HEK293 (cell line): ENCODE measurements at regions of chr1 and their contacts with region 1.

Region 1: DNA sequence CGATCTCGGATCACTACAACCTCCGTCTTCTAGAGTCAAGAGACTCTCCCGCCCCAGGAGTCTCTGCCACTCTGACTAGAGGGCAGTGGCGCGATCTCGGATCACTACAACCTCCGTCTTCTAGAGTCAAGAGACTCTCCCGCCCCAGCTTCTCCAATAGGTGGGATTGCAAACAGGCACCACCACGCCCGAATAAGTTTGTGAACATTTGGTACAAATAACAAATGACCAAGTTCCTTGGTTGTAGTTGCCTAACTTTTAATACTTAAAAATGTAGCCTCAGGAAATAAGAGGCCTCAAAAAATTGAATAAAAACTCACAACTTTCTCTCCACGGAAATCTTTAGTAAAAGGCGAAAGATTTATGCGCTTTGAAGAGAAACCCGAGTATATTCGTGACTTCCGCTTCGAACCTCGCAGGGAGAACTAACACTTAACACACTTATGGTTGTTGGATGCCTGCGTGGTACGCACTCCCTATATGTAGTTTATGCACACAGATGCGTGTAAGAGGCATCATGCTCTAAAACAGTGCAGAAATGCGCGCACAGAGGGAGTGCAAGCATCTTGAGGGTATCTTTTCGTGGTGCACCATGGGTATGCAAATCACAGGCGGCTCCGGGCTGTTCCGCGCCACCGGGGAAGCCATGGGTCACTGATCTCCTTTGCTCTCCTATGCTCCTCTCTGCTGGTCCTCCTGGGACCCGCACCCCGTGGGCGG is 11.4 kb downstream of the BTBD19 start:
- H3K4me3 ChIP-seq: peak overlapping the region; percentile 31
- H3K27ac ChIP-seq: peak overlapping the region; percentile 91
- H3K4me1 ChIP-seq: no peaks in the 10 kb centered on the region
- CTCF ChIP-seq: no peak

Region 2: GRCh38 chr1:44655609-44656008 is 164.2 kb before region 1 on chr1:
- CTCF ChIA-PET with region 1: no interaction called
- POLR2A ChIA-PET with region 1: no interaction called
- H3K4me3 ChIP-seq: no peak overlapping the region
- H3K27ac ChIP-seq: no peak overlapping the region
- H3K4me1 ChIP-seq: no peaks in the 10 kb centered on the region
- CTCF ChIP-seq: peak; percentile 83

Region 3: DNA sequence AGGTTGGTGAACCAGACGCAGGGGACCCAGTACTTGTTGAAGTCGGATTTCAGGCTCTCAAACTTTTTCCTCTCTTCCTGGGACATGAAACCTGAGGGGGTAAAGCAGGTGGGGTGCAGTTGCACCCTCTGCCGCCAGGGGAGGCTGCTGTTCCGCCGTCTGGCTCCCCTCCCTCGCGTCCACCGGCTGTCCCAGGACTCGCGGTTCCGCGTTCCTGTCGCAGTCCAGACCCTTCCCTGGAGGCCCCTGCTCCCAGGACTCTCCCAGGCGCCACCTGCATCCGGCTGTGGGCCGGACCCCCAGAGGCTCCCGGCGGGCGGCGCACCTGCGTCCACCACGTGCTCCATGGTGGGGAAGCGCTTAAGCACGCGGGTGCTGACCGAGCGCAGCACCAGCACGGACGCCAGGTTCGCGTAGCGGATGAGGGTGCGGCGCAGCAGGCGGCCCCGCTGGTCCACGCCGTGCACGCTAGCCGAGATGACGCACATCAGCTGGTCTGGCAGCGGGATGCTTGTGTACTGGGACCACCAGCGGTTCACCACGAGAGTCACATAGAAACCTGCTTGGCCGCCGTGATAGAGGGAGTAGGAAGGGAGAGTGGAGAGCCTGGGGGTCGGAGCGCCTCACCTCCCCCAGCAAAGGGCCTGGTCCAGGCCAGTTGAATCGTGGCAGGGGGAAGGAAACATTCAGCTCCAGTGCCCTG is 33.5 kb before region 1 on chr1:
- CTCF ChIA-PET with region 1: interaction called, 13 read pairs
- POLR2A ChIA-PET with region 1: interaction called, 4 read pairs
- H3K4me3 ChIP-seq: peak overlapping the region; percentile 48
- H3K27ac ChIP-seq: peak overlapping the region; percentile 18; the same call in 1 of the 2 replicates
- H3K4me1 ChIP-seq: 0 out of 2 replicates have a peak, but pooled peaks cover 2% of the 10 kb centered on the region
- CTCF ChIP-seq: peak; percentile 99

Region 4: DNA sequence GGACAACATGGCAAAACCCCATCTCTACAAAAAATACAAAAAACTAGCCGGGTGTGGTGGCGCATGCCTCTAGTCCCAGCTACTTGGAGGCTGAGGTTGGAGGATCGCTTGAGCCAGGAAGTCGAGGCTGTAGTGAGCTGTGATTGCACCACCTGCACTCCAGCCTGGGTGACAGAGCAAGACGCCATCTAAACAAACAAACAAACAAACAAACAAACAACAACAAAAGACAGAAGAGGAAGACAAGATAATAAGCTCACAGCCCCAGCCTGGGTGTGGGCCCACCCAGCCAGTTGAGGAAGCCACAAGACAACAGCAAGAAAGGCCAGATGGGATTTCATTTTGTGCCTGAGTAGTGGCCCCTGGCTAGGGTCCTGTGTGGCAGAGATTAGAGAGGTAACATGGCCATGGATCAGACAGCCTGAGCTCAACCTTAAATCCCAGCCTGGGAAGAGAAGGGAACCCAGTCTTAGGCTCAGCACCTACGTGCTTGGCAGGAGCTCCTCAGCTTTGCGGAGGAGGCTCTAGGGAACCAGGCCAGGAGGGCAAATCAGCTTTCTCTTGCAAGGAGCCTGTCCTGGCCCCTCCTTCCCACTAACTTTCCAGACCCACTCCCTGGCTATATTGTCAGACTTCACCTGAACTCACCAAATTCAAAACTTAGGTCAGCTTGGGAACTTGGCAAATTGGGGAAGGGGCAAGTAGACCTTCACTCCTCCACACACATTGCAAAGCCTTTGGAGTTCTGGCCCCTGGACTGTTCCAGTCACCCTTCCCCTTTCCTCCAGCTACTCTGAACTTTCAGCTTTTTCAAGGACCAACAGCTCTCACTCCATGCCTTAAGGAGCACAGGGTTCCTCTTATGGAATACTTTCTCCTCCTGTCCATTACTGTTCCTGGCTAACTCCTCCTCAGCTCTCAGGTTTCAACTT is 26.7 kb before region 1 on chr1:
- CTCF ChIA-PET with region 1: interaction called, 28 read pairs
- POLR2A ChIA-PET with region 1: interaction called, 62 read pairs
- H3K4me3 ChIP-seq: no peak overlapping the region
- H3K27ac ChIP-seq: no peak overlapping the region
- H3K4me1 ChIP-seq: no peaks in the 10 kb centered on the region
- CTCF ChIP-seq: no peak

Region 5: GRCh38 chr1:44799770-44800584 is 19.8 kb before region 1 on chr1 and contains the start of gene PLK3:
- CTCF ChIA-PET with region 1: interaction called, 28 read pairs
- POLR2A ChIA-PET with region 1: interaction called, 62 read pairs
- H3K4me3 ChIP-seq: peak within 1 kb of the TSS; percentile 70
- H3K27ac ChIP-seq: peak within 1 kb of the TSS; percentile 80
- H3K4me1 ChIP-seq: no peaks in the 10 kb centered on the region
- CTCF ChIP-seq: peak; percentile 97

Region 6: GRCh38 chr1:44807262-44808062 is 12.3 kb before region 1 on chr1 and contains the start of gene DYNLT4:
- CTCF ChIA-PET with region 1: interaction called, 10 read pairs
- POLR2A ChIA-PET with region 1: interaction called, 84 read pairs
- H3K4me3 ChIP-seq: peak within 1 kb of the TSS; percentile 1
- H3K27ac ChIP-seq: peak within 1 kb of the TSS; percentile 72
- H3K4me1 ChIP-seq: peaks cover 19% of the 10 kb centered on the region
- CTCF ChIP-seq: no peak

Region 7: GRCh38 chr1:44842862-44843655 is 23.3 kb after region 1 on chr1 and contains the start of gene PTCH2:
- CTCF ChIA-PET with region 1: interaction called, 3 read pairs
- POLR2A ChIA-PET with region 1: interaction called, 11 read pairs
- H3K4me3 ChIP-seq: peak within 1 kb of the TSS; percentile 59
- H3K27ac ChIP-seq: peak within 1 kb of the TSS; percentile 45; the same call in 1 of the 2 replicates
- H3K4me1 ChIP-seq: no peaks in the 10 kb centered on the region
- CTCF ChIP-seq: no peak

Region 8: DNA sequence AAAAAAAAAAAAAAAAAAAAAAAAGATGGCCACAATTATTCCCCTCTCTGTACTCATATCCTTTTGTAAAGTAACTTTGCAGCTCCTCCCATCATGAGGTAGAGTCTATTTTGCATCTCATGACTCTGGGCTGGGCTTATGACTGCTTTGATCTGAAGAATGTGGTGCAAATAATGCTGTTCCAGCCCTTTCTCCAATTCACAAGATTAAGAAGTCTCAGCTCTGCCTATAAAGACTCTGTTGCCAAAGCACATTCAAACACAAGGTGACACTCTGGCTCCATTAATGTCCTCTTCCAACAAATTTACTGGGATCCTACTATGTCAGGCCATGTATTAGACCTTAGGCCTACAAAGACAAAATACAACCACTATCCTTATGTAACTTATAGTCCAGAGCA is 88.1 kb after region 1 on chr1:
- CTCF ChIA-PET with region 1: no interaction called
- POLR2A ChIA-PET with region 1: no interaction called
- H3K4me3 ChIP-seq: no peak overlapping the region
- H3K27ac ChIP-seq: no peak overlapping the region
- H3K4me1 ChIP-seq: no peaks in the 10 kb centered on the region
- CTCF ChIP-seq: peak; percentile 27; the same call in 1 of the 2 replicates

Region 9: GRCh38 chr1:45410850-45411314 is 591.1 kb after region 1 on chr1:
- CTCF ChIA-PET with region 1: no interaction called
- POLR2A ChIA-PET with region 1: no interaction called
- H3K4me3 ChIP-seq: no peak overlapping the region
- H3K27ac ChIP-seq: no peak overlapping the region
- H3K4me1 ChIP-seq: no peaks in the 10 kb centered on the region
- CTCF ChIP-seq: no peak